Spleen (tissue), 13 donors: ENCODE measurements at regions of chr12 and their contacts with region 1.

Region 1: DNA sequence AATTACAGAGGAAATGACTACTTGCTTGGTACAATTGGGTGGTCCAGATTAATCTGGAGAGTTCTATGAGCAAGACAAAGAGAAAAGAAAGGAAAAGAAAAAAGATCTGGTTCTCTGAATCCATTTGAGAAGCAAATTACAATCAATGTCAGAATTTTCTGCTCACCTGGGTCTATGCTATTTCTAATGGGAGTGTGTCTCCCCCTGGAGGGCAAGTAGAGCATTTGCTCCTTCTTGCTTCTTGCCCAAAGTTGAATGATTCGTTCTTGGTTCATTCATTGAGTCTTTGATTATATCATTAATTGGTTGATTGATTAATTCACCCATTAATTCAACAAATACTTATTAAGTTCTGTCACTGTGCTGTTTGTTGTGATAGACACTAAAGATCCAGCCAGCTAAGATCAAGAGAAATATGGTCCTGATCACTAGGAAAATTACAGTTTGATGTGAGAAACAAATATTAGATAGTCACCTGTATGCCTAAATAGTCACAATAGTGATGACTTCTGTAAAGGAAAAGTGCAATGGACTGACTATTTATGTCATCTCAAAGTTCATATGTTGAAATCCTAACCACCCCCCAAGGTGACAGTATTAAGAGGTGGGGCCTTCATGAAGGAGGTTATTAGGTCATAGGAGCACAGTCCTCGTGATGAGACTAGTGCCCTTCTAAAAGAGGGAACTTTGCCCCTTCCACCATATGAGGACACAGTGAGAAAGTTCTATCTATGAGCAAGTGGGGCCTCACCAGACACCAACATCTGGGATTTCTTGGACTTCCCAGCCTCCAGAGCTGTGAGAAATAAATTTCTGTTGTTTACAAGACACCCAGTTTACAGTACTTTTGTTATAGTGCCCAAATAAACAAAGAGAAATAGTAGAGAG is 8.0 kb upstream of the ASB8 start:
- DNase-seq: no peak
- H3K4me3 ChIP-seq: no peak overlapping the region
- H3K27ac ChIP-seq: no peak overlapping the region
- H3K4me1 ChIP-seq: peaks cover 0 to 11% (median 2%) of the 10 kb centered on the region in 6 donors
- H3K27me3 ChIP-seq: peaks cover 0 to 13% (median 0%) of the 10 kb centered on the region in 7 donors
- CTCF ChIP-seq: peak; percentile 74 to 94 (median 91)
- POLR2A ChIP-seq: no peak

Region 2: GRCh38 chr12:48084066-48084465 is 81.3 kb before region 1 on chr12:
- intact Hi-C with region 1: loop called (anchors 10 kb)
- DNase-seq: no peak
- H3K4me3 ChIP-seq: no peak overlapping the region
- H3K27ac ChIP-seq: peak overlapping the region in 1 of 8 donors; percentile 4
- H3K4me1 ChIP-seq: peaks cover 0 to 20% (median 0%) of the 10 kb centered on the region in 6 donors
- H3K27me3 ChIP-seq: no peaks in the 10 kb centered on the region
- CTCF ChIP-seq: peak in 5 of 11 experiments; percentile 20 to 42 (median 29)
- POLR2A ChIP-seq: no peak

Region 3: GRCh38 chr12:48311313-48311712 is 146.0 kb after region 1 on chr12:
- intact Hi-C with region 1: no loop called
- DNase-seq: no peak
- H3K4me3 ChIP-seq: no peak overlapping the region
- H3K27ac ChIP-seq: peak overlapping the region in 2 of 8 donors; percentile 6 to 11
- H3K4me1 ChIP-seq: peaks cover 0 to 10% (median 3%) of the 10 kb centered on the region in 6 donors
- H3K27me3 ChIP-seq: peaks cover 0 to 5% (median 0%) of the 10 kb centered on the region in 7 donors
- CTCF ChIP-seq: no peak
- POLR2A ChIP-seq: no peak

Region 4: DNA sequence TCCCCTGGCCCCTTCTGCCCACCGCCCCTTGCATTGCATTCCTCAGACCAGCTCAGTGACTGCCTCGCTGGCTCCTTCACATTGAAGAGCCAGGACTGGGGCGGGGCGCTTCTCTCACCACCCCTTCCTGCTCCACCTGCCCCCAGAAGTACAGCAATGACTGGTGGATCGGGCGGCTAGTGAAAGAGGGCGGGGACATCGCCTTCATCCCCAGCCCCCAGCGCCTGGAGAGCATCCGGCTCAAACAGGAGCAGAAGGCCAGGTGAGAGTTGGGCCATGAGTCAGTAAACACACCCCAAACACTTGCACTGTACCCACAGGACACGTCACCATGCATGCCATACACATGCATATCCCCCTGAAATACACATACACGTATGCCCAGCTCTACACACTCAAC is 658.8 kb after region 1 on chr12:
- intact Hi-C with region 1: no loop called
- DNase-seq: no peak
- H3K4me3 ChIP-seq: no peak overlapping the region
- H3K27ac ChIP-seq: no peak overlapping the region
- H3K4me1 ChIP-seq: peaks cover 0 to 7% (median 1%) of the 10 kb centered on the region in 6 donors
- H3K27me3 ChIP-seq: peaks cover 0 to 5% (median 0%) of the 10 kb centered on the region in 7 donors
- CTCF ChIP-seq: no peak
- POLR2A ChIP-seq: no peak

Region 5: GRCh38 chr12:48988030-48988649 is 822.8 kb after region 1 on chr12:
- intact Hi-C with region 1: no loop called
- DNase-seq: peak; percentile 89
- H3K4me3 ChIP-seq: no peak overlapping the region
- H3K27ac ChIP-seq: no peak overlapping the region
- H3K4me1 ChIP-seq: peaks cover 0 to 7% (median 4%) of the 10 kb centered on the region in 6 donors
- H3K27me3 ChIP-seq: peaks cover 0 to 93% (median 18%) of the 10 kb centered on the region in 7 donors
- CTCF ChIP-seq: peak; percentile 34 to 91 (median 81)
- POLR2A ChIP-seq: no peak